ENCODE measurements at regions of chr9 and their contacts with region 1.

Region 1: GRCh38 chr9:127869310-127870152 is 7.9 kb downstream of the AK1 start:
- DNase-seq: peak; percentile 89
- H3K4me3 Mint-ChIP-seq: no peak overlapping the region
- H3K27ac Mint-ChIP-seq: no peak overlapping the region
- H3K4me1 Mint-ChIP-seq: peaks cover 13% of the 10 kb centered on the region
- H3K27me3 Mint-ChIP-seq: no peaks in the 10 kb centered on the region

Region 2: DNA sequence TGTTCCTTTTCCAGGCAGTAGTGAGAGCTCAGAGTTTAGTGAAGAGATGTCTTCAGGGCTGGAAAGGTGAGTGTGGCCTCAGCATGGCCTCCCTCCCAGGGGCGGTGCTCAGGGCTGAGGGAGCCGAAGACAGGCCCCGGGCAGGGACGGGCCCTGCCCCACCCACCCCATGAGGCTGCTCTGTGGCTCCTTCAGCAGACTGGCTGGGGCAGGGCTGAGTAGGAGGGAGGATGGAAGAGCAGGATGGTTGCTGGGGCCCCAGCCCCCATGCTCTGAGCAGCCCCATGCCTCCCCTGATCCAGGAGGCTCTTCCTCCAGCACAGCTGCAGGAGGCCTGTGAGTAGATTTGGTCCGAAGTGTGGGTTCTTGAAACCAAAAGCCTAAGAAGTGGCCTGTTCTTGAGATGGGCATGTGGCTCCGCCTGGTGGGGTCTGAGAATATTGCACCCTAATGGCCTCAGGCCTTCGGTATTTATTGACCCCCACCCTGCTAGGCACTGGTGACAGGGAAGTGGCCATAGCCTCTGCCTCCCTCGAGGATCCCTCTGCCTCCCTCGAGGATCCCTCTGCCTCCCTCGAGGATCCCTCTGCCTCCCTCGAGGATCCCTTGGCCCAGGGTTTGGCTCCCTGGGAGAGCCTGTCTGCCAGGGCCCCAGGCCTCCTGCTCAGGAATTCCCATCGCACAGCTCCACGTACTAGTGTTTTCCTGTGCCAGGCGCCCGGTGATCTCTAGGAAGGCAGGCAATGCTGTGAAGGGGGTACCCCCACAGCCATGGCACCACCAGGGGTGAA is 670.3 kb before region 1 on chr9:
- CTCF ChIA-PET with region 1: no interaction called
- POLR2A ChIA-PET with region 1: no interaction called
- intact Hi-C with region 1: no loop called
- DNase-seq: peak; percentile 86
- H3K4me3 Mint-ChIP-seq: no peak overlapping the region
- H3K27ac Mint-ChIP-seq: peak overlapping the region; percentile 8
- H3K4me1 Mint-ChIP-seq: peaks cover 7% of the 10 kb centered on the region
- H3K27me3 Mint-ChIP-seq: no peaks in the 10 kb centered on the region

Region 3: DNA sequence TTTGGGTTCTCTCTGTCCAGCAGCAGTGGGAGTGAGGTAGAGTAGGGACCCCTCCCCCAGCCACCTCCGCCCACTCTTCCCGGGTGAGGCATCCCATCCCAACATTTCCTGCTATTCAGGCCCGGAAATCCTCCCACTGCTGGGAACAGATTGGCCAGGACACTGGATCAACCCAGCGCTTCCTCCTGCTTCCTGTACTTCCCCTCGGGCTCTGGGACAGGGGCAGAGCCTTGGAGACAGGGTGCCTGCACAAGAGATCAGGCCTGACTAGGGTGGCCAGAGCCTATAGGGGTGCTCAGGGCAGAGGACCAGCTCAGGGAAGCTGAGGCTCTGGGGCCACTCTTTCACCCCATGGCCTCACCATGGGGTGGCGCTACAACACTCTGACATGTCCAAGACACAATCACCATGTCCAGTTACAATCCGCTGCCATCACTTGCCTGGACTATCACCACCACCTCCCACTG is 105.6 kb before region 1 on chr9:
- CTCF ChIA-PET with region 1: interaction called, 29 read pairs
- POLR2A ChIA-PET with region 1: no interaction called
- intact Hi-C with region 1: no loop called
- DNase-seq: peak; percentile 61
- H3K4me3 Mint-ChIP-seq: no peak overlapping the region
- H3K27ac Mint-ChIP-seq: peak overlapping the region; percentile 23
- H3K4me1 Mint-ChIP-seq: peaks cover 41% of the 10 kb centered on the region
- H3K27me3 Mint-ChIP-seq: no peaks in the 10 kb centered on the region

Region 4: DNA sequence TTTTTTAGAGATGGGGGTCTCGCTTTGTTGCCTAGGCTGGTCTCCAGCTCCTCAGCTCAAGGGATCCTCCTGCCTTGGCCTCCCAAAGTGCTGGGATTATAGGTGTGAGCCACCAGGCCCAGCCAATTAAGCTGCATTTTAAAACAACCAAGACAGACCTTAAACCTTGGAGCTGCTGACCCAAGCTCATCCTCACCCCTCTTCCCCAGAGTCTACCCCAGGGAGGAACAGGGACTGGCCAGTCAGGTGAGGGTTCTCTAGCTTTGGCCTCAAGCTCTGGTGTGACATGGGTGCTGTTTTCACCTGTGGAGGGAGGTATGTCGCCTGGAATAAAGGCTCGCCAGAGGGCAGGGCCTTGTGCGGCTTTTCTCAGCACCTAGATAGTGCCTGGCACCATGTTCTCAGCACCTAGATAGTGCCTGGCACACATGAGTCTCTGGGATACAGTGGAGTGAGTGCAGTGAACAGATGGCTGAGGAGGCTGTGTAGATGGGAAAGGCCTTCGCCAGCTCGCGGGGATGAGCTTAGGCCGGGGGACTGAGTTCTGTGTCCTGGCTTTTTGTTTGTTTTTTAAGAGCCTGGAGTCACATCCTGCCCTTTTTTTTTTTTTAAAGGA is 76.3 kb before region 1 on chr9:
- CTCF ChIA-PET with region 1: interaction called, 11 read pairs
- POLR2A ChIA-PET with region 1: no interaction called
- intact Hi-C with region 1: loop called (anchors 1 kb)
- DNase-seq: no peak
- H3K4me3 Mint-ChIP-seq: no peak overlapping the region
- H3K27ac Mint-ChIP-seq: no peak overlapping the region
- H3K4me1 Mint-ChIP-seq: peaks cover 43% of the 10 kb centered on the region
- H3K27me3 Mint-ChIP-seq: no peaks in the 10 kb centered on the region

Region 5: DNA sequence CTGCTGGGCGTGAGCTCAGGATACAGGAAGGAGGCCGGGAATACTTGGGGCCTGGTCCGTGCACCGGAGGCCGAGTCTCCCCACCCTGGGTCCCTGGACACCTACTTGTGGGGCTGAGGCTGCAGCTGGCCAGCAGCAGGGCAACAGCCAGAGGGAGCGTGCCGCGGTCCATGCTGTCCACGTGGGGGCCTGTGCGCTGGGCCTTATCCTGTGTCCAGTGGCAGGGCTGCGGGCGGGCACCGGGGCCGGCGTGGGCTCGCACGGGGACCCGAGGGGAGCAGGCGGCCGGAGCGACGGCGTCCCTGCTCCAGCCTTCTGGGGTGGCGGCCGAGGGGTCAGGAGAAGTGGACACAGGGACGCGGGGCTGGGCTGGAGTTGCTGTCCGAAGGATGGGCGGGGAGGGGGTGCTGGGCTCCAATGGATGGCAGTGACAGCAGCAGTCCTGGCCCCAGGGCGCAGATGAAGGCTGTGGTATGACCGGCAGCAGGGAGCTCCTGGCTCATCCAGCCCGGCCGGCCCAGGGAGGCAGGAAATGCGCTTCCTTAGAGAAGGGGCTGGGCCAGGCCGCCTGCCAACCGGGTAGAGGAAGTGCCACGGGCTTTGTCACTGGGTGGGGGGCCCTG is 15.2 kb before region 1 on chr9 and contains the start of gene ENG:
- CTCF ChIA-PET with region 1: interaction called, 20 read pairs
- POLR2A ChIA-PET with region 1: interaction called, 4 read pairs
- intact Hi-C with region 1: no loop called
- DNase-seq: peak; percentile 42
- H3K4me3 Mint-ChIP-seq: peak within 1 kb of the TSS; percentile 84
- H3K27ac Mint-ChIP-seq: peak within 1 kb of the TSS; percentile 81
- H3K4me1 Mint-ChIP-seq: peaks cover 21% of the 10 kb centered on the region
- H3K27me3 Mint-ChIP-seq: no peaks in the 10 kb centered on the region
- total RNA-seq, gene ENG: 12.0 to 12.2 TPM

Region 6: GRCh38 chr9:127916665-127917613 is 47.4 kb after region 1 on chr9 and contains the start of gene ST6GALNAC4:
- CTCF ChIA-PET with region 1: interaction called, 53 read pairs
- POLR2A ChIA-PET with region 1: no interaction called
- intact Hi-C with region 1: loop called (anchors 5 kb)
- DNase-seq: peak; percentile 98
- H3K4me3 Mint-ChIP-seq: peak within 1 kb of the TSS; percentile 77
- H3K27ac Mint-ChIP-seq: peak within 1 kb of the TSS; percentile 54
- H3K4me1 Mint-ChIP-seq: peaks cover 43% of the 10 kb centered on the region
- H3K27me3 Mint-ChIP-seq: no peaks in the 10 kb centered on the region
- total RNA-seq, gene ST6GALNAC4: 21.2 to 23.5 TPM

Measured in activated CD4-positive, alpha-beta memory T cell treated with anti-CD3 and anti-CD28 coated beads for 36 hours (primary cell).